BJ (cell line): ENCODE measurements at regions of chr1 and their contacts with region 1.

Region 1: DNA sequence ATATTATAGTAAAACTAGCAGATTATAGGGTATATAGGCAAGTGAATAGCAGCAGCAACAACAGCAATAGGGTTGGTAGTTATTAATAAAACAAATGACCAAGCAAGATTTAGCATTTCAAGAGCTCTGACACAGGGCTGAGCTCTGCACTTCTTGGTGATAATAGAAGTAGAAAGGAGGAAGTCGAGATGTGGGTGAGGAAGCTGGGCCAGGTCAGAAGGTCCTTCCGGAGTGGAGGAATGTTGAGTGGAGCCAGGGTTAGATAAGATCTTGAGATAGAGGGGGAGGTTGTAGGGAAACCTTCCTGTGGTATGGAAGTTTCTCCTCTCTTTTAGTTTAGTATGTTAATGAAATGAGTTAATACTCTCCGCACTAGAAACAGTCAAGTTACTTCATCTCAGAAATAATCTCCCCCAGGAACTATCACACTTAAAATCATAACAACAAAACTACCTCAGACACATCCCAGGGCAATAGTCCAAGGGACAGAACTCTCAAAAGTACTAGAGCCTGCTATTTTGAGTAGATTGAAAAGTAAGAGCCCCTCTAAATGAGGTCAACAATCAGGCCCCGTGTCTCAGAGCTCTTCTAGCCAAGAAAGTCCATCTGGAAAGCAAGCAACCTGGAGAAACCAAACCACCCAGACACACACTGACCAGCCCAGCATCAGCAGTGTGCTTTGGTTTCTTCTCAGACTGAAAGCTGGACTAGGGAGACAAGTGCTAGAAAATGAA is 45.4 kb upstream of the ATP1B1 start:
- DNase-seq: no peak
- H3K4me3 ChIP-seq: no peak overlapping the region
- H3K27me3 ChIP-seq: no peaks in the 10 kb centered on the region
- CTCF ChIP-seq: no peak

Region 2: GRCh38 chr1:169012416-169012815 is 48.7 kb before region 1 on chr1:
- CTCF ChIA-PET with region 1: no interaction called
- POLR2A ChIA-PET with region 1: interaction called, 25 read pairs
- DNase-seq: no peak
- H3K4me3 ChIP-seq: no peak overlapping the region
- H3K27me3 ChIP-seq: no peaks in the 10 kb centered on the region
- CTCF ChIP-seq: no peak